ENCODE measurements at regions of chr19 and their contacts with region 1.

Region 1: GRCh38 chr19:984165-984967 is at the start of gene WDR18:
- DNase-seq: peak; percentile 91
- H3K4me3 Mint-ChIP-seq: peak within 1 kb of the TSS; percentile 91
- H3K27ac Mint-ChIP-seq: peak within 1 kb of the TSS; percentile 83
- H3K4me1 Mint-ChIP-seq: peaks cover 22% of the 10 kb centered on the region
- H3K27me3 Mint-ChIP-seq: no peaks in the 10 kb centered on the region
- total RNA-seq, gene WDR18: 42.0 to 44.3 TPM

Region 2: GRCh38 chr19:769616-770015 is 214.8 kb before region 1 on chr19:
- CTCF ChIA-PET with region 1: interaction called, 10 read pairs
- POLR2A ChIA-PET with region 1: no interaction called
- DNase-seq: no peak
- H3K4me3 Mint-ChIP-seq: no peak overlapping the region
- H3K27ac Mint-ChIP-seq: no peak overlapping the region
- H3K4me1 Mint-ChIP-seq: peaks cover 3% of the 10 kb centered on the region
- H3K27me3 Mint-ChIP-seq: peaks cover 5% of the 10 kb centered on the region

Region 3: GRCh38 chr19:907183-907853 is 77.0 kb before region 1 on chr19:
- CTCF ChIA-PET with region 1: interaction called, 3 read pairs
- POLR2A ChIA-PET with region 1: interaction called, 11 read pairs
- DNase-seq: no peak
- H3K4me3 Mint-ChIP-seq: no peak overlapping the region
- H3K27ac Mint-ChIP-seq: peak overlapping the region; percentile 98
- H3K4me1 Mint-ChIP-seq: peaks cover 57% of the 10 kb centered on the region
- H3K27me3 Mint-ChIP-seq: no peaks in the 10 kb centered on the region

Region 4: DNA sequence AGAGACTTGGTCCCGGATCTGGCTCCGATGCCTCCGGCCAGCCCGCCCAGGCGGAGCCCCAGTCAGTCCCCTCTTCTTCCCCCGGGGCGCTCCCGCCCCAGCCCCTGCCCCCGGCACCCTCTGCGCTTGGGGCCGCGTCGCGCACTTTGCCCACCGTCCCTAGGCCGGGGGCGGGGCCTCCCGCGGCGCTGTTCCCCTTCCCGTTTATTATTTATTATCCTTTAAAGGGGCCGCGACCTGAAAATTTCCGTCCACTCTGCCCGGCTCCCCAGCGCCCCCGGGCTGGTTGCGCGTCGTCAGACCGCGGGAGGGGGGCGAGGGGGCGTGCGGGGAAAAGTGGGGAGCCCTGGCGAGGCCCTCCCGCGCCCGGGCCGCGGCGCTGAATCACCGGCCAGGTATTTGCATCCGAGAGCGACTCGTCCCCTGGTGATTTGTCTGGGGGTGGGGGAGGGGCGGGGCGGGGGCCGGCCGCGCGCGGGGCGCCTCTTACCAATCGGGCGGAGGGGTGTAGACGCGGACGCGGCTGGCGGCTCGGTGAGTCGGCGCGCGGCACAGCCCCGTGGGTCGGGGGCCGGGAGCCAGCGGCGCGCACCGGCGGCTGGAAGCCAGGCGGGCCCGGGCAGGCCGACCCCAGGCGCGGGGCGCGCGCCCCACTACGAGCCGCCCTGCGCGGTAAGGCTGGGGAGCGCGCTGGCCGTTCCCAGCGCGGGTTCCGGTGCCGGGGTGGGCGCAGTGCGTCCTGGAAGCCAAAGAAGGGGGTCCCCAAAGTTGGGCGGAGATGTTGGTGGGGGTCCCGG is 58.6 kb before region 1 on chr19 and contains the start of gene ARID3A:
- CTCF ChIA-PET with region 1: interaction called, 96 read pairs
- POLR2A ChIA-PET with region 1: interaction called, 20 read pairs
- DNase-seq: peak; percentile 80
- H3K4me3 Mint-ChIP-seq: peak within 1 kb of the TSS; percentile 78
- H3K27ac Mint-ChIP-seq: peak within 1 kb of the TSS; percentile 73
- H3K4me1 Mint-ChIP-seq: peaks cover 18% of the 10 kb centered on the region
- H3K27me3 Mint-ChIP-seq: peaks cover 3% of the 10 kb centered on the region
- total RNA-seq, gene ARID3A: 32.4 to 34.0 TPM

Region 5: DNA sequence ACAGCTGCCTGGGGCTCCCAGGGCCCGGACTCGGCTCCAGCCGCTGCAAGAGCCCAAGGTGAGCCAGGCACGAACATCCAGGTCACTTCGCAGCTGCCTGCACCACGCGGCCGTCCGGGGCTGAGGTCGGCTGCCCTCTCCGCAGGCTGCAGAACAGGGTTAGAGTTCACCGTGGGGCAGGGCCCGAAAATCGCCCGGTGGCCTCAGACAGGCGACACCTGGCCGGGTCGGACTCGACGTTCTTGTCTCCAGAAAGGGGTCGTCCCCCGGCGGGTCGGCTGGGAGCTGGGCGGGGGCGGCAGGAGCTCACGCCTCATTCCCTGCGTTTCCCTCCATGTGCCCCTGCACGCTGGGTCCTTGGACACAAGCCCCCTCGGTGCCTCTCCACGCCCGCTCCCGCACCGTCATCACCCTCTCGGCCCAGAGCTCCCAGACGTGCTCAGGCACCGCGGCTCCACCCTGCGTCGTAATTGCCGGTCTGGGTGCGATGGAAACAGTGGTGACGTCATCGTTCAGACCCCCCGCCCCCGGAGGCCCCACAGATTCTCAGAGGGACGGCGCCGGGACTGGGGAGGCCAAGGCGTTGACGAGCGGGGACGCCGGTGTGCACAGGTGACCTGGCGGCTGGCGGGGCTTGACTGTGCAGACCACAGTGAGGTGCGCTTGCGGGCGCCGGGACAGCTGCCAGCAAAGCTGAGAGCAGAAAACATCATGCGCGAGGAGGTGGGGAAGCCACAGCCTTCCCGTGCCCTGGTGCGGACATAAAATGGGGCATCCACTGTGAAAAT is 11.9 kb after region 1 on chr19:
- CTCF ChIA-PET with region 1: interaction called, 9 read pairs
- POLR2A ChIA-PET with region 1: interaction called, 18 read pairs
- DNase-seq: peak; percentile 74
- H3K4me3 Mint-ChIP-seq: peak overlapping the region; percentile 32
- H3K27ac Mint-ChIP-seq: peak overlapping the region; percentile 26
- H3K4me1 Mint-ChIP-seq: peaks cover 13% of the 10 kb centered on the region
- H3K27me3 Mint-ChIP-seq: peaks cover 28% of the 10 kb centered on the region

Region 6: DNA sequence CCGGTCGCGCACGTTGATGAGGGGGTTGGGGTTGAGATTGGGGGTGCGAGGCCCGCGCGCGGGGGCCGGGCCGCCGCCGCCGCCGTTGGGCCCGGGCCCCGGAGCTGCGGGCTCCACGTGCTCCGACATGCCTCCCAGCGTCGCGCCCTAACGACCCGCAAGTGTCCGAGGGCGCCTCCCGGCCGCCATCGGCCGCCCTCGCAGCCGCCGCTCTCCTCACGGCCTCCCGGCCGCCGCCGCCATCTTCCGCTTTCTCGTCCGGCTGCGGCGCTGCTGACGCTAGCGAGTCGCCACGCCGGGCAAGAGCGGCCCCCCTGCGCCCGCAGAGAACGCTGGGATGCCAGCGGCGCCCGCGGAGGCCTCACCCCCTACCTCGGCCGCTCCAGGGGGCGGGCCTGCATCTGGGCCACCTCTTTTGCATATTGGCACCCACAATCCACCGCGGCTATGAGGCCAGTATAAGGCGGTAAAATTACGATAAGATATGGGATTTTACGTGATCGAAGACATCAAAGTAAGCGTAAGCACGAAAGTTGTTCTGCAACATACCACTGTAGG is 36.6 kb after region 1 on chr19 and contains the start of gene TMEM259:
- CTCF ChIA-PET with region 1: no interaction called
- POLR2A ChIA-PET with region 1: interaction called, 17 read pairs
- DNase-seq: peak; percentile 98
- H3K4me3 Mint-ChIP-seq: peak within 1 kb of the TSS; percentile 91
- H3K27ac Mint-ChIP-seq: peak within 1 kb of the TSS; percentile 92
- H3K4me1 Mint-ChIP-seq: peaks cover 47% of the 10 kb centered on the region
- H3K27me3 Mint-ChIP-seq: no peaks in the 10 kb centered on the region
- total RNA-seq, gene TMEM259: 181 TPM